AG04450 (cell line): ENCODE measurements at regions of chr1 and their contacts with region 1.

Region 1: GRCh38 chr1:179002552-179003345 is 22.9 kb upstream of the FAM20B start:
- DNase-seq: peak; percentile 32
- H3K4me3 ChIP-seq: no peak overlapping the region
- H3K27ac ChIP-seq: no peak overlapping the region
- H3K27me3 ChIP-seq: no peaks in the 10 kb centered on the region
- CTCF ChIP-seq: peak; percentile 97

Region 2: GRCh38 chr1:178501705-178502329 is 500.9 kb before region 1 on chr1:
- CTCF ChIA-PET with region 1: interaction called, 21 read pairs
- POLR2A ChIA-PET with region 1: no interaction called
- DNase-seq: peak; percentile 36
- H3K4me3 ChIP-seq: no peak overlapping the region
- H3K27ac ChIP-seq: no peak overlapping the region
- H3K27me3 ChIP-seq: peaks cover 3% of the 10 kb centered on the region
- CTCF ChIP-seq: peak; percentile 97

Region 3: DNA sequence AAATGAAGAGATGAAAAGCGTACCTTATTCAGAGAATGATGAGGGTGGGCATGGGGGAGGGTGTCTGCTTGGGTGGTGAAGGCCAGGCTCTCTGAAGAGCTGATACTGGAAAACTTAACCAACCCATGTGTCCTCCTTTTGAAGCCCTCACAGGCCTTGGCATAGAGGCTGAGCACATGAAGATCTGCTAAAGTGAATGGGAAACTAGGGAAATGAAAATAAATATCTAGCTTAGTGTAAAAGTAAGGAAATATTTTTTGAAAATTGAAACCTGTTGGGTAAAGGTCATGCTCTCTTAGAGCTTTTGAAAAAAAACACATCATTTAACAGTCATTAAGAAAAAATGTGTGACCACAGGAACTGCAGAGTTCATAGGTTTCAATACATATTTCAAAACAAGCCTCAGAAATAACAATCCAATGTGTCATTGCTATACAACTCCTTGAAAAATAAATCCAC is 318.2 kb before region 1 on chr1:
- CTCF ChIA-PET with region 1: interaction called, 12 read pairs
- POLR2A ChIA-PET with region 1: no interaction called
- DNase-seq: peak; percentile 76
- H3K4me3 ChIP-seq: no peak overlapping the region
- H3K27ac ChIP-seq: peak overlapping the region; percentile 73
- H3K27me3 ChIP-seq: no peaks in the 10 kb centered on the region
- CTCF ChIP-seq: no peak

Region 4: DNA sequence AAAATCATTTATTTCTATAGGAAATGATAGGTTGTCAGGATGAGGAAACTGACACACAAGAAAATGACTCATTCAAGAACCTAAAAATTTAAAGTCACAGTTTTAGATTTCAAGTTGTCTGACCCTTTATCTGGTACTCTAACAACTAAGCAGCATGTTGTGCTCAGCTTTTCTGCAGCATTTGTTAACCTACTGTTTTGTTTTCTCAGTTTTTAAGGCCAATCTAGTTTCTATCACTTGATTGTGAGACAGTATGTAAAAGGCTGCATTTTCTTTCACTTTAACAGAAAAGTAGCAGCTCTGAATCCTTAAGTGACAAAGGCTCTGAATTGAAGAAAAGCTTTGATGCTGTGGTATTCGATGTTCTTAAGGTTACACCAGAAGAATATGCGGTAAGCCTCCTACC is 218.6 kb before region 1 on chr1:
- CTCF ChIA-PET with region 1: interaction called, 15 read pairs
- POLR2A ChIA-PET with region 1: no interaction called
- DNase-seq: no peak
- H3K4me3 ChIP-seq: no peak overlapping the region
- H3K27ac ChIP-seq: no peak overlapping the region
- H3K27me3 ChIP-seq: no peaks in the 10 kb centered on the region
- CTCF ChIP-seq: no peak

Region 5: DNA sequence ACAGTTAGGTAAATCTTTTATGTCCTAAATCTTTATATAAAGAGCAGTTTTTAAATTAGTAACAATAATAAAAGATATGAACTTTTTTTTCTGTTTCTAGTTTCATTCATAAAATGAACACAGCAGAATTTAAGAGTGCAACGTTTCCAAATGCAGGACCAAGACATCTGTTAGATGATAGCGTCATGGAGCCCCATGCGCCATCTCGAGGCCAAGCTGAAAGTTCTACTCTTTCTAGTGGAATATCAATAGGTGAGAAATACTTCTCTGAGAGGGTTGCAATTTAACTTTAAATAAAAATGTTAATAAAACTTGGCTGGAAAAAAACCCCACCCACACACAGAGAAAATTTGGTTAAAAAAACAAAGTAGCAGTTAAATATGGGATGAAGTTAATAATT is 116.9 kb before region 1 on chr1:
- CTCF ChIA-PET with region 1: interaction called, 12 read pairs
- POLR2A ChIA-PET with region 1: no interaction called
- DNase-seq: no peak
- H3K4me3 ChIP-seq: no peak overlapping the region
- H3K27ac ChIP-seq: no peak overlapping the region
- H3K27me3 ChIP-seq: no peaks in the 10 kb centered on the region
- CTCF ChIP-seq: no peak

Region 6: GRCh38 chr1:178986204-178986603 is 16.5 kb before region 1 on chr1:
- CTCF ChIA-PET with region 1: interaction called, 10 read pairs
- POLR2A ChIA-PET with region 1: interaction called, 3 read pairs
- DNase-seq: no peak
- H3K4me3 ChIP-seq: no peak overlapping the region
- H3K27ac ChIP-seq: no peak overlapping the region
- H3K27me3 ChIP-seq: no peaks in the 10 kb centered on the region
- CTCF ChIP-seq: no peak

Region 7: GRCh38 chr1:179164494-179164893 is 161.7 kb after region 1 on chr1:
- CTCF ChIA-PET with region 1: no interaction called
- POLR2A ChIA-PET with region 1: no interaction called
- DNase-seq: peak; percentile 69
- H3K4me3 ChIP-seq: no peak overlapping the region
- H3K27ac ChIP-seq: no peak overlapping the region
- H3K27me3 ChIP-seq: no peaks in the 10 kb centered on the region
- CTCF ChIP-seq: no peak